ENCODE measurements at regions of chr6 and their contacts with region 1.

Region 1: GRCh38 chr6:134317471-134318131 is at the start of gene SGK1:
- DNase-seq: no peak
- total RNA-seq, gene SGK1: 61.1 to 143 TPM

Region 2: DNA sequence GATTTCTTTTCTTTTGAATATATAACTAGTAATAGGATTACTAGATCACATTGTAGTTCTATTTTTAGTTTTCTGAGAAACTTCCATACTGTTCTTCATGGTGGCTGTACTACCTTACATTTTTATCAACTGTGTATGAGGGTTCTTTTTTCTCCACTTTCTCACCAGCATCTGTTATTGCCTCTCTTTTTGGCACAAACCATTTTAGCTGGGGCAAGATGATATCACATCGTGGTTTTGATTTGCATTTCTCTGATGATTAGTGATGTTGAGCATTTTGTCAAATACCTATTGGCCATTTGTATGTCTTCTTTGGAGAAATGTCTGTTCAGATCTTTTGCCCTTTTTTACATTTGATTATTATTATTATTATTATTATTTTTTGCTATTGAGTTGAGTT is 514.7 kb before region 1 on chr6:
- intact Hi-C with region 1: no loop called
- DNase-seq: no peak

Region 3: GRCh38 chr6:134288538-134289203 is 28.9 kb before region 1 on chr6:
- intact Hi-C with region 1: no loop called
- DNase-seq: no peak

Region 4: DNA sequence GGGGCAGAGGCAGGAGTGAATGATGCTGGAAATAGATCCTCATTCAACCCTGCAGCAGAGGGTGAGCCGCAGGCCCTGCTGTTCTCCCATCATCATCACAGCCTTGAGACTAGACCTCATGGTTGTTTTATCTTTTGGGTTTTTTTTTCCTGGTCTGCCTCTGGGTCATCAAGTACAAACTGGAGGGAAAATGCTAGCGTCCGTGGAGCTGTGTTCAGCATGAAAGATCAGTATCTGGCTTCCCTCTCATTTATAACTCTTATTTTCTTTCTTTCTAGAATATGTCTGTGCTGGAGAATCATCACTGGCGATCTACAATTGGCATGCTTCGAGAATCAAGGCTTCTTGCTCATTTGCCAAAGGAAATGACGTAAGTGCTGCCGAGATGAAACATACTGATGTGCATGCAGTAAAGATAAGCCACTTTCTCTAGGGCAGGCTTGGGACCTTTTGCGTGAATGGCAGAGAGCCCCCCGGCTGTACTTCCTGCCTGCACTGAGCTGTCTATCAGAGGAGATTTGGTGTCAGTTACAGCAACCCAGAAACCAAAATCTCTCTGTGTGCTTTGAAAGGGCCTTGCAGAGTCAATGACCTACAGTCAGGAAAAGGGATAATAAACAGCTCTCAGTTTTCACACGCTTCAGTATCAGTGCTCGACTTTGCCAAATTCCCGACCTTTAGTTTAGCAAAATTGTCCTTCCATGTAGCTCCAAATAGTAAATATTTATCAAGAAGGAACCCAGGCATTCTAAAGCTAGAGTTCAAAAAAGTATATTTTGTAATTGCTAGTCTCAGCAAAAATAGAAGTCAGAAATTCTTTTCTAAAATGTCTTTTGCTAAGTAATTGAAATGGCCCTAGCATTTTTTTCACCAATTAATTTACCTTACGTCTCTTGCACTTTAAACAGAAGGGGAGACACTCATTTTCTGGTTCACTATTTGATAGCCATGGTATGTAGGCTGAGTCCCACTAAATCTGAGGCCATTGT is 1856.2 kb after region 1 on chr6:
- intact Hi-C with region 1: loop called in 1 of 2 experiments (anchors 10 kb)
- DNase-seq: no peak